GM12878 (cell line): ENCODE measurements at regions of chr12 and their contacts with region 1.

Region 1: DNA sequence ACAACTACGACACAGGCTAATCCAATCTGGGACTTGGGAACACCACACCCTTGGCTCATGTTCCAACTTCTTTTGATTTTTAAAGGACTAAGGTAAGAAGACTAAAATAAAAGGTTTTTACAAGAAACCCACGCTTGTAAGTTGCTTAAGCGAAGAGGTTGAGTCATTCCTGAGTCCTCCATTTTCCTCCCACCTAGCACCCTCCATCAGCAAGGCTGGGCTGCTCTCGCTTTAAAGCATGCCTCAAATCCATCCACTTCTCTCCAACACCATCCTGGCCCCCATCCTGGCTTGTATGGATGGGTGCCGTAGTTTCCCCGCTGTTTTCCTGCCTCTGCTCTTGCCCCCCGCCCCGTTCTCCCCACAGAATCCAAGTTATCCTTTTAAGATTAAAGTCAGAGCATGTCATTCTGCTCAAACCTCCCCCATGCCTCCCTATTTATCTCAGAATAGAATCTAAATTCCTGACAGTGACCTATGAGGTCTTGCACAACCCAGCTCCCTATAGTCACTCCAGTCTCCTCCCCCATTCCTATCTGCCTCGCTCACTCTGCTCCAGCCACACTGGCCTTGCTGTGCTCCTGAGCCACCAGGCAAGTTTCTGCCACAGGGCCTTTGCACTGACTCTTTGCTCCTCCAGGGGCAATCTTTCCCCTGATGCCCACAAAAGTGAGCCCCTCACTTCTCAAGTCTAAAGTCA is 34.5 kb downstream of the SCARB1 start:
- DNase-seq: no peak
- ATAC-seq: 0 out of 3 replicates have a peak, but pooled peaks have one; percentile 9
- H3K4me3 ChIP-seq: no peak overlapping the region
- H3K27ac ChIP-seq: peak overlapping the region; percentile 20; the same call in 1 of the 2 replicates
- H3K4me1 ChIP-seq: peaks cover 17% of the 10 kb centered on the region
- H3K27me3 ChIP-seq: no peaks in the 10 kb centered on the region
- CTCF ChIP-seq: no peak
- EP300 ChIP-seq: no peak
- POLR2A ChIP-seq: no peak
- RAD21 ChIP-seq: no peak

Region 2: DNA sequence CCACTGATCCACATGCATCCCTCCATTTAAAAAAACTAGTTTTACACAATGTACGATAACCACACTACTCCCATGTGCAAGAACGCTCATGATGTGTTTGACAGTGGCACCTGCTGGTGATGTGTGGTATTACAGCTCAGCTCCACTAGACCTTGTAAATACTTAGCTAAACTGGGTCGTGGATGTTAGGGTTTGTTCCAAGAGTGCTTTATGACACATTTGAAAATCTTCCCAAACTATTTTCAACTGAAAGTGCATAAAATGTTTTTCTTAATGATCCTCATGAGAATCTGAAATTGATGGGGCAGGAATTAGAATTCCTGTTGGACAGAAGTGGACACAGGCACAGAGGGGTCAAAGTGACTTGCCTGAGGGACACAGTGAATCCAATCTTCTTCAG is 64.7 kb before region 1 on chr12:
- CTCF ChIA-PET with region 1: no interaction called
- POLR2A ChIA-PET with region 1: no interaction called
- RAD21 ChIA-PET with region 1: no interaction called
- SMC1A ChIA-PET with region 1: no interaction called
- in situ Hi-C with region 1: no loop called
- intact Hi-C with region 1: no loop called
- DNase-seq: no peak
- ATAC-seq: no peak
- H3K4me3 ChIP-seq: no peak overlapping the region
- H3K27ac ChIP-seq: no peak overlapping the region
- H3K4me1 ChIP-seq: peaks cover 5% of the 10 kb centered on the region
- H3K27me3 ChIP-seq: no peaks in the 10 kb centered on the region
- CTCF ChIP-seq: peak; percentile 37 to 80 (median 68); a peak in 5 of 6 replicates
- EP300 ChIP-seq: no peak
- POLR2A ChIP-seq: no peak
- RAD21 ChIP-seq: peak; percentile 48

Region 3: DNA sequence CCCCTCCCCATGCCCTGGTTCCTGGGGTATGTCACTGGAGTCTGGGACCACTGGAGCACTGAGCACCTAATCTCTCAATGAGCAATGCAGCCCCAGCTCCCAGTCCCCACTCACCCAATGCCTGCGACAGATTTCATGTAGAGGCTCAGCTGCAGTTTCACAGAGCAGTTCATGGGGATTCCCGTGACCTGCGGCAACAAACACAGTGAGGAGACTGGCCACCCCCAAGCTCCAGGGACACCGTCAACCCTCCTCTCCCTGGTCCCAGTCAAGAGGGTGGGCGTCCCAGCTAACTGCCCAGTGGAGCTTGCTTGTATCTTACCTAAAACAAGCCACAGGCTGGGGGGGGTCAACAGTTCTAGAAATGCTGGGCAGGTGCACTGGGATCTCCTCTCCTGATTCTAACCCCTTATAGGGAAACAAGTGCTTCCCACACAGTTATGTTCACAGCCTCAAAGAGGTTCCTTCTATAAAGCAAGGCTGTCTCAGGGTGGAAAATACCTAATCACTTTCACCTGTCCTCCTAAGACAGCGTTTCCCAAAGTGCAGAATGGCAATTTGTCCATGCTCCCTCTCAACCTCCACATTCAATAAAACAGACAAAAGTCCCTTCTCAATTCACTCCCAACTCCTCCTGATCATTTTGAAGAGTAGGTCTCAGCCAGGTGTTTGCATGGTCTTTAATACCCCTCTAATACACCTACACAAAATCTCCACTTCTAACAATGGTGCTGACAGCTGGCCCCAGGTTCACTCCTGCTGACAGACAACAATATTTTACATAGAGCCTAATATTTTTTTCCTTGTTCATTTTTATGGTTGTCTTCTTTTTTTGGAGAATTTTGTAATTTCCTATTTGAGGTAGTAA is 33.8 kb before region 1 on chr12:
- CTCF ChIA-PET with region 1: no interaction called
- POLR2A ChIA-PET with region 1: interaction called, 5 read pairs
- RAD21 ChIA-PET with region 1: interaction called, 14 read pairs
- SMC1A ChIA-PET with region 1: interaction called, 3 read pairs
- in situ Hi-C with region 1: no loop called
- intact Hi-C with region 1: no loop called
- DNase-seq: no peak
- ATAC-seq: peak; percentile 98
- H3K4me3 ChIP-seq: no peak overlapping the region
- H3K27ac ChIP-seq: peak overlapping the region; percentile 89
- H3K4me1 ChIP-seq: peaks cover 25% of the 10 kb centered on the region
- H3K27me3 ChIP-seq: no peaks in the 10 kb centered on the region
- CTCF ChIP-seq: no peak
- EP300 ChIP-seq: 0 out of 4 replicates have a peak, but pooled peaks of 1 of the 2 experiments have one; percentile 17
- POLR2A ChIP-seq: peak; percentile 59
- RAD21 ChIP-seq: no peak

Region 4: DNA sequence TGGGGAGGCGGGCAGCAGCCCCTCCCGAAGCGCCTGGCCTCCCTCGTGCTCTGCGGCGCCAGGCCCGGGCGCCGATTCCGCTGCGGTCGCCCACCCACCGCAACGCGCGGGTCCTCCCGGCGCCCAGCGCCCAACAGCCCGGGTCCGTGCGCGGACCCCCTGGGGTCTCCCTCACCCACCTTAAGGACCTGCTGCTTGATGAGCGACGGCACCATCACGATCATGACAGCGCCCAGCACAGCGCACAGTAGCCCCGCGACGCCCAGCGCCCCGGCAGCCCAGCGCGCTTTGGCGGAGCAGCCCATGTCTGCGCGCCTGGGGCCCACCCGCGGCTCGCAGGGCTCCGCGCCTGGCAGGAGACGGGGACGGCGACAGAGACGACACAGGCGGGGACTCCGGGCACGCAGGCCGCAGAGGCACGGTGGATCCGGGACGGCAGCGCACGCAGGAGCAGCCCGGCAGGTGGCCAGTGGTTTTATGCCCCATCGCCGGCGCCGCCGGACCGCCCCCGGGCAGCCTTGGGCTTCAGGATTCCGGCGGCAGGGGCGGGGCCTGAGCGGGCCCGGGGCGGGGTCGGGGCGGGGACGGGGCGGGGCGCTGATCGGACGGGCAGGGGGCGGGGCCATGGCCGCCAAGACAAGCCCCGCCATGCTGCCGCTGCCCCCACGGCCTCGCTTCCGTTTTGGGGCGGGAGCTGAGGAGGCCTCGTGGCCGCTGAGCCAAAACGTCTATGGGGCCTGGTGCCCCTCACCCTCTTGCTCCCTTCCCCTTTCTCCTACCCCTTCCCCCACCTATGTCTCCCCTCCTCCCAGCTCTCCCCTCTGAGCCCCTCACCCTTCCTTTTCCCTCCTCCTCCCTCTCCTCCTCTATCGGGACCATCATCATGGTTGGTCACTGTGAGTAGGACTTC is 34.5 kb after region 1 on chr12 and contains the start of gene SCARB1:
- CTCF ChIA-PET with region 1: interaction called, 4 read pairs
- POLR2A ChIA-PET with region 1: interaction called, 12 read pairs
- RAD21 ChIA-PET with region 1: interaction called, 4 read pairs
- SMC1A ChIA-PET with region 1: interaction called, 12 read pairs
- in situ Hi-C with region 1: no loop called
- intact Hi-C with region 1: no loop called
- DNase-seq: peak; percentile 26
- ATAC-seq: peak; percentile 84
- H3K4me3 ChIP-seq: peak within 1 kb of the TSS; percentile 97
- H3K27ac ChIP-seq: peak within 1 kb of the TSS; percentile 80
- H3K4me1 ChIP-seq: peaks cover 11% of the 10 kb centered on the region
- H3K27me3 ChIP-seq: no peaks in the 10 kb centered on the region
- CTCF ChIP-seq: no peak
- EP300 ChIP-seq: no peak
- POLR2A ChIP-seq: peak; percentile 98
- RAD21 ChIP-seq: no peak
- polyA plus RNA-seq, gene SCARB1: 0.34 to 3.3 TPM

Region 5: GRCh38 chr12:124898200-124898922 is 69.2 kb after region 1 on chr12:
- CTCF ChIA-PET with region 1: interaction called, 3 read pairs
- POLR2A ChIA-PET with region 1: interaction called, 3 read pairs
- RAD21 ChIA-PET with region 1: interaction called, 10 read pairs
- SMC1A ChIA-PET with region 1: interaction called, 3 read pairs
- in situ Hi-C with region 1: no loop called
- intact Hi-C with region 1: no loop called
- DNase-seq: no peak
- ATAC-seq: peak; percentile 74
- H3K4me3 ChIP-seq: no peak overlapping the region; the same call in 1 of the 2 replicates
- H3K27ac ChIP-seq: peak overlapping the region; percentile 27
- H3K4me1 ChIP-seq: peaks cover 32% of the 10 kb centered on the region
- H3K27me3 ChIP-seq: no peaks in the 10 kb centered on the region
- CTCF ChIP-seq: peak; percentile 72 to 81 (median 78)
- EP300 ChIP-seq: no peak
- POLR2A ChIP-seq: no peak
- RAD21 ChIP-seq: peak; percentile 60

Region 6: GRCh38 chr12:124927201-124928094 is 98.3 kb after region 1 on chr12:
- CTCF ChIA-PET with region 1: no interaction called
- POLR2A ChIA-PET with region 1: no interaction called
- RAD21 ChIA-PET with region 1: no interaction called
- SMC1A ChIA-PET with region 1: no interaction called
- in situ Hi-C with region 1: no loop called
- intact Hi-C with region 1: no loop called
- DNase-seq: peak; percentile 90
- ATAC-seq: peak; percentile 85
- H3K4me3 ChIP-seq: peak overlapping the region; percentile 80
- H3K27ac ChIP-seq: peak overlapping the region; percentile 90
- H3K4me1 ChIP-seq: peaks cover 11% of the 10 kb centered on the region
- H3K27me3 ChIP-seq: no peaks in the 10 kb centered on the region
- CTCF ChIP-seq: no peak
- EP300 ChIP-seq: peak in 1 of 2 experiments; percentile 68; a peak in 1 of 4 replicates
- POLR2A ChIP-seq: no peak
- RAD21 ChIP-seq: no peak